OCI-LY7 (cell line): ENCODE measurements at regions of chr3 and their contacts with region 1.

Region 1: DNA sequence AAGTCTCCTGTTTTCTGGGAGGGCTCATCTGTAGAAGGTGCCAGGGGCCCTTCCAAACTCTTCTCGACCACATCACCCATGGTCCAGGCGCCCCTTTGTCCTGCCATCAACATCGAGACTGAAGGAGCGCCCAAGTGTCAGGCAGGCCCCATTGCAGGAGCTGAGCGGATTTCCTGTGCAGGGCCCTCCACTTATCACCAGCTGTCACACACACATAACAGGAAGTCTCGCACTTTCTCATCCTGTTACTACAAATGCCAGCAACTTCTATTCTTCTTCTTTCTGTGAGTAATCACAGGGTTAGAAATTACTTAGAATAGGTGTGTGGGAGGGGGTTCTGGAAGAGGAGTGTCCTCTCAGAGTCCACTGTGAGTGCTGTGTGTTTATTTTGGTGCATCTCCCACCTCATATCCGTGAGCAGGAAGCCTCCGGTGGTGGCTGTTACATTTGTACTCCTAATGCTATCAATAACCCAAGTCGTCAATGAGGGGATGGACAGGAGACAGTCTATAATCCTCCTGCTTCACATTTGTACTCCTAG is at the start of gene KLHL6:
- DNase-seq: peak; percentile 93
- H3K4me3 ChIP-seq: peak within 1 kb of the TSS; percentile 97
- H3K27ac ChIP-seq: peak within 1 kb of the TSS; percentile 96
- H3K4me1 ChIP-seq: peaks cover 41% of the 10 kb centered on the region
- CTCF ChIP-seq: no peak
- total RNA-seq, gene KLHL6: 143 TPM in 2 replicates

Region 2: DNA sequence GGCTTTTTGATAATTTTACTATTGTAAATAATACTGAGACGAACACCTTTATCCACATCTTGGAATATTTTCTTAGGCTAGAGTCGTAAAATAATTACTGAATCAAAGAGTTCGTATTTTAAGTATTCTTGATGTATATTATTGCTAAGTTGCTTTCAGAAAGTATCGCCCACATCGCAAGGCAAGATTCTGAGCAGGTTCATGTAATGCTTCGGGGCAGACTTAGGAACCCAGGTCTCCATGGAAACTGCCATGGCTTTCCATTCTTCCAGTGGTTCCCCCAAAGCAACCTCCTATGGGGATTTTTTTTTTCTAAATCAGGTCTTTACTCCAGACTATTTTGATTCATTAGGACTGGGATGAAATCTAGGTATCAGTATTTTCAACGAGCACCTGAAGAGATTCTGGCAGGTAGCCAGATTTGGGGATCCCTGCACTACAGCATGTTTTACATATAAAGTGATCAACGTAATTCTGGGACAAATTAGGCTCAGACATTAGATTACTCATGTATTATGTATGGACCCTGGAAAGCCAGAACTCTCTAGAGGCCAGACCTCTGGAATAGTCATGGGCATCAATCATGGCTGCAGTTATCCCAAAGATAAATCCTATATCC is 216.0 kb before region 1 on chr3:
- CTCF ChIA-PET with region 1: no interaction called
- POLR2A ChIA-PET with region 1: no interaction called
- intact Hi-C with region 1: no loop called
- DNase-seq: no peak
- H3K4me3 ChIP-seq: no peak overlapping the region
- H3K27ac ChIP-seq: no peak overlapping the region
- H3K4me1 ChIP-seq: no peaks in the 10 kb centered on the region
- CTCF ChIP-seq: no peak

Region 3: GRCh38 chr3:183369117-183369516 is 186.5 kb before region 1 on chr3:
- CTCF ChIA-PET with region 1: no interaction called
- POLR2A ChIA-PET with region 1: no interaction called
- intact Hi-C with region 1: no loop called
- DNase-seq: no peak
- H3K4me3 ChIP-seq: no peak overlapping the region
- H3K27ac ChIP-seq: no peak overlapping the region
- H3K4me1 ChIP-seq: no peaks in the 10 kb centered on the region
- CTCF ChIP-seq: no peak

Region 4: DNA sequence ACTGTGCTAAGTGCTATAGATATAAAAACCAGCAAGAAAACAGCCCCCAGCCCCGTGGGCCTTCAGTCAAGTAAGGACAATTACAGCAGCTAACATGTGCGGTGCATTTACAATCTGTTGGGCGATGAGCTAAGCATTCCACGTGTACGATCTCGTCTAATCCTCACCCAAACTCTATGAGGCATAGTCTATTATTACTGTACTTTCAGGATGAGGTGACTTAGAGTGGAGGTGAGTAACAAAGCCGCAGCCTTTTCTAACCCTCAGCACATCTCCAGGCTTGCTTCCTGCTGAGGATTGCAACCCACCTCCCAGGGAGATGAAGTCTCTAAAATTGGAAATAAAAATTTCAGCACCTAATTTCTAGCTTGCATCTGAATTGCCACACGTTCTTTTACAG is 74.0 kb before region 1 on chr3:
- CTCF ChIA-PET with region 1: interaction called, 8 read pairs
- POLR2A ChIA-PET with region 1: interaction called, 4 read pairs
- intact Hi-C with region 1: loop called (anchors 2 kb)
- DNase-seq: no peak
- H3K4me3 ChIP-seq: no peak overlapping the region
- H3K27ac ChIP-seq: no peak overlapping the region
- H3K4me1 ChIP-seq: peaks cover 44% of the 10 kb centered on the region
- CTCF ChIP-seq: no peak

Region 5: DNA sequence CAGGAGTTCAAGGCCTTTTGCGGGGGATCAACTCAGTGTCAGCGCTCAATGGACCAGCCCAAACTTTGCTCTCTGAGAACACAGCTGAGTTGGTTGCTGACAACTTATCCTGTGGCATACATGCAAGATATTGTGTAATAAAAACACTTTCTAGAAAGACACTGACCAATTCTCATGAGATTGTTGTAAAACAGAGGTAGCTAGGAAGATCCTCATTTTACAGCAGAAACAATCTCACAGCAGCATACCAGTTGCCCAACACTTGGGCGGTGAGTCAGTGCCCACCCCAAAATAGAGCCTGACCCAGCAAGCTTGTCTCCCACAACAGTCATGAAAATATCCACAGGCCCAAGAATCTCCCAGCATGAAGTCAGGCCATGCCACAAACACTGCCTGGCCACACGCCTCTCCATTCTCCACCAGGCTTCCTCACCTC is 18.3 kb before region 1 on chr3:
- CTCF ChIA-PET with region 1: no interaction called
- POLR2A ChIA-PET with region 1: interaction called, 19 read pairs
- intact Hi-C with region 1: loop called (anchors 1 kb)
- DNase-seq: no peak
- H3K4me3 ChIP-seq: peak overlapping the region; percentile 57
- H3K27ac ChIP-seq: peak overlapping the region; percentile 74
- H3K4me1 ChIP-seq: peaks cover 98% of the 10 kb centered on the region
- CTCF ChIP-seq: no peak

Region 6: GRCh38 chr3:183591881-183592521 is 36.4 kb after region 1 on chr3:
- CTCF ChIA-PET with region 1: interaction called, 16 read pairs
- POLR2A ChIA-PET with region 1: interaction called, 39 read pairs
- intact Hi-C with region 1: loop called (anchors 1 kb)
- DNase-seq: peak; percentile 95
- H3K4me3 ChIP-seq: peak overlapping the region; percentile 57
- H3K27ac ChIP-seq: peak overlapping the region; percentile 98
- H3K4me1 ChIP-seq: peaks cover 84% of the 10 kb centered on the region
- CTCF ChIP-seq: peak; percentile 90

Region 7: GRCh38 chr3:183766745-183767606 is 211.4 kb after region 1 on chr3:
- CTCF ChIA-PET with region 1: no interaction called
- POLR2A ChIA-PET with region 1: interaction called, 3 read pairs
- intact Hi-C with region 1: loop called (anchors 1 kb)
- DNase-seq: peak; percentile 82
- H3K4me3 ChIP-seq: no peak overlapping the region
- H3K27ac ChIP-seq: peak overlapping the region; percentile 44
- H3K4me1 ChIP-seq: peaks cover 27% of the 10 kb centered on the region
- CTCF ChIP-seq: peak; percentile 91